ENCODE measurements at regions of chr12 and their contacts with region 1.

Region 1: DNA sequence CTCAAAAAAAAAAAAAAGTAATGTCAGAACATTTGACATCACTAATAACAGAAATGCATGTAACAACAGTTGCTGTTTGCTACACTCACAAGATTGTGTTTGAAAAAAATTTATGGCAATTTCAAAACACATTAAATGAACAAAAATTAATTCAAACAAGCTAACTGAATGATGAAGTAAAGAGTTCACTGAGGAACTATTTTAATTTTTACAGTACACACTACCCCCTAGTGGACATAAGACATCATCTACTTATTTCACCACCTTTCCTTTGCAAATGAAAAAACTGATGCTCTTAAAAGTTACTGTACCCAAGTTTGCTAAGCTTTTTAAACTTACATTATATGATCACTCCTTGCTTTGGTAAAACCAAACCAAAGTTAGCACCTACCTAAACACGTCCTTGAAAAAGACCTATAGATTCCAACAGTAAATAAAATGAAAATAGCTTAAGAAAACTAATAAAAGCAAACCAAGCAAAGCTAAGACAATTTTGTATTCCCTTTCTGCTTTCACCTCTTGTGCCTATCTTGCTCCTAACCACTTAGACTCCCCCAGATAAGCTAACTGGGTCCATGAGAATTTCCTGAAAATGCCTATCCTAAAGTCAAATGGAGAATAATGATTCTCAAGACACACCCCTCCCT is 22.2 kb downstream of the UBE2N start:
- DNase-seq: no peak
- ATAC-seq: peak; percentile 31
- H3K4me3 Mint-ChIP-seq: no peak overlapping the region
- H3K27ac Mint-ChIP-seq: peak overlapping the region; percentile 44
- H3K4me1 Mint-ChIP-seq: peaks cover 90% of the 10 kb centered on the region
- H3K27me3 Mint-ChIP-seq: no peaks in the 10 kb centered on the region

Region 2: DNA sequence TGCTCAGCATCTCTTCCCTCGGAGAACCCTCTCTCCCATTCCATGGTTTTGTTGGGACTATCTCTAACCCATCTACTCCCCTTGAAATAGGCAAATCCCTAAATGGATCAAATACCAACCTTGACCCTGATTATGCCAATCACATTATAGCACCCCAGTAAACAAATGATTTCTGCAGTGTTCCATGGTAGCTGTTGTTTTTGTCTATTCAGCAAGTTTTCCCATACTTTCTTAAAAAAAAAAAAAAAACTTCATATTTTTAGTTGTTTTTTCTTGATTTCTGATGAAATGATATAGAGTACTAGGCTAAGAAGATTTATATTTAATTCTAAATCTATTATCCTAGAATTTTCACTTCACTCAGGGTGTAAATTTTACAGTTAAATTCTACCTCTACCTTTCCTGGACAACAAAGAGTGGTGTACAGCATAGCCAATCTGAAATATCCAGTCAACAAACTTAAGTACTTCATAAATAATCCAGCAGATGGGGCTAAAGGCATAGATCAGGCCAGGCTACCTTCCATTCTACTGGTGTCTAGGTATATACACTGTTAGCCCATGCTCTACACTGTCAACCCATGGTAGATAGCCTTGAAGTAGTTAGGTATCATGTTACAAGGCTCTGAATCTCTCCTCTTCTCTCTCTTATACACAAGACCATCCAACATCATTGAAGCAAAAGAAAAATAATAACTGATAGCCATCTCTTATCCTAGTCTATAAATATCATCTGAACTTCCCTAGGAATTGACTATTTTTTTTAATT is 634.5 kb before region 1 on chr12:
- CTCF ChIA-PET with region 1: no interaction called
- POLR2A ChIA-PET with region 1: no interaction called
- intact Hi-C with region 1: loop called in 1 of 2 experiments (anchors 5 kb)
- DNase-seq: peak; percentile 33
- ATAC-seq: peak; percentile 98
- H3K4me3 Mint-ChIP-seq: no peak overlapping the region
- H3K27ac Mint-ChIP-seq: no peak overlapping the region
- H3K4me1 Mint-ChIP-seq: peaks cover 2% of the 10 kb centered on the region
- H3K27me3 Mint-ChIP-seq: no peaks in the 10 kb centered on the region

Region 3: DNA sequence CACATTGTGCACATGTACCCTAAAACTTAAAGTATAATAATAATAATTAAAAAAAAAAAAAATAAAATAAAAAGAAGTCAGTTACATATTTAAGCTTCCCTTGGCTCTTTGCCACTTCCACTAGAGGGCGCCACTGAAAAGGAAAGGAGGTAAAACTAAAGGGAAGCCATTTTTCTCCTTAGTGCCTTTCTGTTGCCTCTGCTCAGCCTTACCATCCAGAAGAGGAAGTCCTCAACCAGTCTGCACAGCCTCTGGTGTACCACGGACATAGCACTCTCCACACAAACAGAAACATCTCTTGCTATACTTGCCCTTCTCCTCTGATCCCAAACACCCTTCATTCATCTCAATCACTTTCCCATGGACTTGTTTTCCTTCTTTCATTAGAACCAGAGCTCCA is 321.4 kb before region 1 on chr12:
- CTCF ChIA-PET with region 1: interaction called, 12 read pairs
- POLR2A ChIA-PET with region 1: no interaction called
- intact Hi-C with region 1: loop called in 1 of 2 experiments (anchors 5 kb)
- DNase-seq: peak; percentile 84
- ATAC-seq: peak; percentile 87
- H3K4me3 Mint-ChIP-seq: no peak overlapping the region
- H3K27ac Mint-ChIP-seq: peak overlapping the region; percentile 51
- H3K4me1 Mint-ChIP-seq: peaks cover 21% of the 10 kb centered on the region
- H3K27me3 Mint-ChIP-seq: peaks cover 3% of the 10 kb centered on the region

Region 4: GRCh38 chr12:93378373-93379325 is 40.9 kb before region 1 on chr12:
- CTCF ChIA-PET with region 1: interaction called, 9 read pairs
- POLR2A ChIA-PET with region 1: interaction called, 12 read pairs
- intact Hi-C with region 1: loop called (anchors 1 to 5 kb)
- DNase-seq: peak; percentile 76
- ATAC-seq: peak; percentile 66
- H3K4me3 Mint-ChIP-seq: peak overlapping the region; percentile 98
- H3K27ac Mint-ChIP-seq: peak overlapping the region; percentile 99
- H3K4me1 Mint-ChIP-seq: peaks cover 42% of the 10 kb centered on the region
- H3K27me3 Mint-ChIP-seq: no peaks in the 10 kb centered on the region

Region 5: GRCh38 chr12:93397412-93397811 is 22.1 kb before region 1 on chr12:
- CTCF ChIA-PET with region 1: interaction called, 31 read pairs
- POLR2A ChIA-PET with region 1: interaction called, 11 read pairs
- intact Hi-C with region 1: loop called in 1 of 2 experiments (anchors 2 kb)
- DNase-seq: no peak
- ATAC-seq: no peak
- H3K4me3 Mint-ChIP-seq: no peak overlapping the region
- H3K27ac Mint-ChIP-seq: no peak overlapping the region
- H3K4me1 Mint-ChIP-seq: peaks cover 4% of the 10 kb centered on the region
- H3K27me3 Mint-ChIP-seq: no peaks in the 10 kb centered on the region

Region 6: GRCh38 chr12:93441617-93442410 is 22.3 kb after region 1 on chr12 and contains the start of gene UBE2N:
- CTCF ChIA-PET with region 1: interaction called, 55 read pairs
- POLR2A ChIA-PET with region 1: interaction called, 8 read pairs
- intact Hi-C with region 1: loop called in 1 of 2 experiments (anchors 2 kb)
- DNase-seq: peak; percentile 98
- ATAC-seq: peak; percentile 84
- H3K4me3 Mint-ChIP-seq: peak within 1 kb of the TSS; percentile 99
- H3K27ac Mint-ChIP-seq: peak within 1 kb of the TSS; percentile 99
- H3K4me1 Mint-ChIP-seq: peaks cover 48% of the 10 kb centered on the region
- H3K27me3 Mint-ChIP-seq: no peaks in the 10 kb centered on the region
- total RNA-seq, gene UBE2N: 186 to 279 TPM